PC-9 (cell line): ENCODE measurements at regions of chr17 and their contacts with region 1.

Region 1: GRCh38 chr17:11144358-11145233 is 96.4 kb upstream of the SHISA6 start:
- DNase-seq: peak; percentile 14 to 38
- H3K4me3 ChIP-seq: no peak overlapping the region
- H3K27ac ChIP-seq: no peak overlapping the region
- H3K4me1 ChIP-seq: no peaks in the 10 kb centered on the region
- H3K27me3 ChIP-seq: peaks cover 9% of the 10 kb centered on the region; the same call in 1 of the 2 replicates
- CTCF ChIP-seq: peak; percentile 67

Region 2: DNA sequence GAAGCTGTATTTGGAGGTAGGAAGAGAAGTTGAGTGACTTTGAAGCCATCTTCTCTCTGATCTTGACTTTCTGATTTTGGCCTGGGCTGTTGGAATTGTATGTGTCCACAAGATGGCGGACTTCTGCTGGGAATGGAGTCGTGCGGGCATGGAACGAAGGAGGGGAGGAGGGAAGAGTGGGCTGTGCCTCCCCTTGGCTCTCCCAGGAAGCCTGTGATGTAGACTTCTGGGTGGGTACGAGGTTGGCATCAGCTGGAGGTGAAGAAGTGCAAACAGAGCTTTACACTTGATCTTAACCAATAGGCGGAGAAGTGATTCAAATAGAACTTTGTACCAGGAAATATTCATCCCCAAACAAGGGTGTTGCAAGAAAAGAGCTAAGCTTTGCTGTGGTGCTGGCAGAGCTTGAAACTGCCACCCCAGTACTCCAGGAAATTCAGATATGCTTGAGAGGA is 407.4 kb before region 1 on chr17:
- CTCF ChIA-PET with region 1: interaction called, 5 read pairs
- POLR2A ChIA-PET with region 1: no interaction called
- intact Hi-C with region 1: loop called (anchors 1 kb)
- DNase-seq: peak; percentile 47 to 53
- H3K4me3 ChIP-seq: no peak overlapping the region
- H3K27ac ChIP-seq: no peak overlapping the region
- H3K4me1 ChIP-seq: no peaks in the 10 kb centered on the region
- H3K27me3 ChIP-seq: peaks cover 49% of the 10 kb centered on the region
- CTCF ChIP-seq: peak; percentile 66